IMR-90 (cell line): ENCODE measurements at regions of chr2 and their contacts with region 1.

Region 1: DNA sequence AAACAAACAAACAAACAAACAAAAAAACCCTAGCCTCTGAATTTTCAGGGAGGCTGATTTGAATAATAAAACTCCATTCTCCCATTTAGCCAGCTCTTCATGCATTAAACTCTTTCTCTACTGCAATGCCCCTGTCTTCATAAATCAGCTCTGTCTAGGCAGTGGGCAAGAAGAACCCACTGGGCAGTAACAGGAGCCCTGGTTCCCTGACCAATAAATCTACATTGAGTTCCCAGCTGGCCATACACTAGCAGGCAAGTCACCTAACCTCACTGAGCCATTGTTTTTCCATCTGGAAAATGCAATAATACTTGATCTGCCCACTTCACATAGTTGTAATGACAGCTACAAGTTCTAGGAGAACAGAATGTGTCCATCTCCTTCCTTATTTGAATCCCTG is 57.6 kb upstream of the YPEL5 start:
- DNase-seq: no peak
- ATAC-seq: no peak
- H3K4me3 ChIP-seq: no peak overlapping the region
- H3K27ac ChIP-seq: no peak overlapping the region
- H3K4me1 ChIP-seq: no peaks in the 10 kb centered on the region
- H3K27me3 ChIP-seq: peaks cover 52% of the 10 kb centered on the region
- CTCF ChIP-seq: no peak
- POLR2A ChIP-seq: no peak
- RAD21 ChIP-seq: no peak

Region 2: GRCh38 chr2:29632018-29632417 is 457.2 kb before region 1 on chr2:
- CTCF ChIA-PET with region 1: no interaction called
- POLR2A ChIA-PET with region 1: no interaction called
- dilution Hi-C with region 1: no loop called
- in situ Hi-C with region 1: no loop called
- intact Hi-C with region 1: no loop called
- DNase-seq: peak; percentile 75
- ATAC-seq: peak; percentile 54
- H3K4me3 ChIP-seq: no peak overlapping the region
- H3K27ac ChIP-seq: no peak overlapping the region
- H3K4me1 ChIP-seq: peaks cover 8% of the 10 kb centered on the region
- H3K27me3 ChIP-seq: no peaks in the 10 kb centered on the region
- CTCF ChIP-seq: no peak
- POLR2A ChIP-seq: no peak
- RAD21 ChIP-seq: no peak

Region 3: GRCh38 chr2:30122362-30122761 is 33.2 kb after region 1 on chr2:
- CTCF ChIA-PET with region 1: no interaction called
- POLR2A ChIA-PET with region 1: no interaction called
- dilution Hi-C with region 1: no loop called
- in situ Hi-C with region 1: loop called (anchors 5 kb)
- intact Hi-C with region 1: no loop called
- DNase-seq: no peak
- ATAC-seq: no peak
- H3K4me3 ChIP-seq: no peak overlapping the region
- H3K27ac ChIP-seq: no peak overlapping the region
- H3K4me1 ChIP-seq: no peaks in the 10 kb centered on the region; the same call in 1 of the 2 replicates
- H3K27me3 ChIP-seq: peaks cover 30% of the 10 kb centered on the region
- CTCF ChIP-seq: no peak
- POLR2A ChIP-seq: no peak
- RAD21 ChIP-seq: no peak

Region 4: DNA sequence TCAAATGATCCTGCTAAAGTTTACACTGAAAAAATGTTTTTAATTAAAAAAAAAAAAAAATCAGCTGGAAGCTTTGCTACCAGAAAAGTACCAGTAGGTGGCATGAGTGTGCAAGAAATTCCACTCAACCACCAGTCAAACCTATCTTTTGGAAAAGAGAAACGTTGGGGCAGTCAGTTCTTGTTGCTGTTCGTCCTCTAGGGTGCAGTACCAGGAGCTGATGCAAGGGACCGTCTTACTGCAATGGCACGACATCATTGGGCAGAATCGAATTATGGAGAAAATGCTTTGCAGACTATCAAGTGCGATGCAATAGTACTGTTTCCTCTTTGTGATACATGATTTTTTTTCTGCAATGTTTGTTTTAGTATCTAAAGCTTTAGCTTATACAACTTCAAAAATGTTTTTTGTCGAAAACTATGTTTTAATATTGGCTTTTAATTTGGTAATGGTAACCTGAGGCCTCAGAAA is 75.9 kb after region 1 on chr2:
- CTCF ChIA-PET with region 1: no interaction called
- POLR2A ChIA-PET with region 1: no interaction called
- dilution Hi-C with region 1: no loop called
- in situ Hi-C with region 1: no loop called
- intact Hi-C with region 1: no loop called
- DNase-seq: peak; percentile 93
- ATAC-seq: peak; percentile 96
- H3K4me3 ChIP-seq: no peak overlapping the region
- H3K27ac ChIP-seq: no peak overlapping the region
- H3K4me1 ChIP-seq: peaks cover 3% of the 10 kb centered on the region; the same call in 1 of the 2 replicates
- H3K27me3 ChIP-seq: no peaks in the 10 kb centered on the region
- CTCF ChIP-seq: peak; percentile 98
- POLR2A ChIP-seq: peak; percentile 43; the same call in 1 of the 2 replicates
- RAD21 ChIP-seq: peak; percentile 84

Region 5: DNA sequence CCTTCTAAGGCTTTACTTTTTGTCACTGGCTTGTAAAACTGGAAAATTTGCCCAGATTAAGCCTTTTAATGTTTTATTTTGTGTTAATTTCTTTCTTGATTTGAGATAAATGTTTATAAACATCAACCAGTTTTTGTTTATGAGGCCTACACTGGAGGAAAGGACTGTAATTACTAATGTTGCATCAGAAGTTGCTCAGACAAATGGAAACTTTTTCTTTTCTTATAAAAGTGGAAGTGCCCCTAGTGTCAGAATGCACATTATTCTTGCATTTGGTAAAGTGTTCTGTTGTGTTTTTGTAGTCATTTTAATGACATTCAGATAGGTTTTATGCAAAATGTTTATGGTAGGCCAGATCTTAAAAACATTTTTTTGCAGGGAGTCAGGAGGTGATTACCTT is 383.2 kb after region 1 on chr2:
- CTCF ChIA-PET with region 1: no interaction called
- POLR2A ChIA-PET with region 1: no interaction called
- dilution Hi-C with region 1: no loop called
- in situ Hi-C with region 1: no loop called
- intact Hi-C with region 1: no loop called
- DNase-seq: no peak
- ATAC-seq: no peak; the same call in 1 of the 2 replicates
- H3K4me3 ChIP-seq: no peak overlapping the region
- H3K27ac ChIP-seq: no peak overlapping the region
- H3K4me1 ChIP-seq: no peaks in the 10 kb centered on the region
- H3K27me3 ChIP-seq: no peaks in the 10 kb centered on the region
- CTCF ChIP-seq: 0 out of 2 replicates have a peak, but pooled peaks have one; percentile 5
- POLR2A ChIP-seq: no peak
- RAD21 ChIP-seq: no peak

Region 6: DNA sequence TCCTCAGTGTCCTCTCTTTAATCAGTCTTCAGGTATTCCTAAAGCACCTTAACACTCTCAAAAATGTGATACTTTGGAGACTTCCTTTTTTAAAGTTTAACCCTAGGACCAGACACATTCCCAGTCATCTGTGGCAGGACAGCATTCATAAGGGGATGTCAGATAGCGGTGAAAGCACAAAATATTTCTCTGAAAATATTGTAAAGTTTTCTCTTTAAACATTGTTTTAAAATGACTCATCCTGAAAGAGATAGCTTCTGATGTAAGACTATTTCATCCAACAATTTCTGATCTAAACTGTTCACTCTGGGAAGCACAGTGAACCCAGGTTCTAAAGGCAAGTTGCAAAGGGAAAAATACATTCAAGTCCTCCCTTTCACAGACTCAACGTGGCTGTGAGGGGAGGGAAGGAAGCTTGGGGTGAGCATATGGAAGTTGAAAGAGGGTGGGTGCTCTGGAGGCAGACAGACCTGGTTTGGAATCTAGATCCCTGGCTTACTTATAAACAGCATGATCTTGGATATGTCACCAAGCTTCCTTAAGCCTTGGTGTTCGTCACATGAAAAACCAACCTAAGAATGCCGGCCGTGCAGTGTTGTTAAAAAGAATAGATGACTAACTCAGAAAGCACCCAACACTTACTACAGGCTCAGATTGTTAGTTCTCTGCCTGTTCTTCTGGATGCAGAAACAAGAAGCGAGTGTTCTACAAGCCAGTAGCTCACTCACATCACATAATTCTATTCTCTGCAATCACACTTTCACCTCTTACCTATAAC is 1036.9 kb after region 1 on chr2:
- CTCF ChIA-PET with region 1: no interaction called
- POLR2A ChIA-PET with region 1: interaction called, 10 read pairs
- dilution Hi-C with region 1: no loop called
- in situ Hi-C with region 1: no loop called
- intact Hi-C with region 1: no loop called
- DNase-seq: no peak
- ATAC-seq: no peak; the same call in 1 of the 2 replicates
- H3K4me3 ChIP-seq: no peak overlapping the region
- H3K27ac ChIP-seq: no peak overlapping the region
- H3K4me1 ChIP-seq: no peaks in the 10 kb centered on the region
- H3K27me3 ChIP-seq: peaks cover 2% of the 10 kb centered on the region; the same call in 1 of the 2 replicates
- CTCF ChIP-seq: no peak
- POLR2A ChIP-seq: no peak
- RAD21 ChIP-seq: no peak